Activated B cell treated with CpG ODN at 0.5 μM for 24 hours (primary cell): ENCODE measurements at regions of chr14 and their contacts with region 1.

Region 1: DNA sequence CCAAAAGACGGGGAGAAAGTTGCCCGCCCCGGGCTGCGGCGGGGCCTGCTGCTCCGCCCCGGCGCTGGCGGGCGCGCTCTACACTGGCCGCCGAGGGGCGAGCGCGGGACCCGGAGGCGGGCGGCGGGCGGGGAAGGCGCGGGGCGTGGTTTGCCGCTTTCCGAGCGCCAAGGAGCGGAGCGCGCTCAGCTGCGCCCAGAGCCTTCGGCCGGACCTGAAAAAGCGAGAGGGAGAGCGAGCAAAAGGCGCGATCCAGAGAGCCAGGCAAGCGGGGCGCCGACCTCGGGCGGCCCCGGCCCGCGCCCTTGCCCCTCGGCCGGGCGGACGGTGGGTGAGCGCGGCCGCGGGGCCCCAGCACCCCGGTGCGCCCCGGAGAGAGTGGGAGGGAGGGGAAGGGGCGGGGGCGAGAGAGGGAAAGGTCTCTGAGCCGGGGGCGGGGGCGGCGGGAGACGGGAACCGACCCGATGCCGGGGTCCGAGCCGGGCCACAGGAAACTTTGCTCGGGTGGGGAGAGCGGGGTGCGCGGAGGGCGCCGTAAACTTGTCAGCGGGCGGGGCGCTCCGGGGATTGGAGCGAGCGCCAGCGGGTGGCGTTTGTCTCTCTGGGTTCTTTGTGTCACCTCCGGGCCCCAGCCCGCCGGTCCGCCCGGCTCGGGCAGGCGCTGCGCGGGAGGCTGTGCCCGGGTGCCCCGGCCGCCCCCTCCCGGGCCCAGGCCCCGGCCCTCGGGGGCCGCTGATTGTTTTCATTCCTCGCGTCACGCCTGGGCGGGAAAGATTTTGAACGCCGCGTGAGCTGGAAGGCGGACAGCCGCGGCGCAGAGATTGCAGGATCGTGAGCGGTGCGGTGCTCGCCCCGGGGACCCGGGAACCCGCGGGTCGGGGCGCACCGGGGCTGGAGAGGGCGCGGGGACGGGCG is at the start of gene SYNE2:
- DNase-seq: peak; percentile 83
- ATAC-seq: peak; percentile 91
- H3K4me3 Mint-ChIP-seq: peak within 1 kb of the TSS; percentile 92
- H3K27ac Mint-ChIP-seq: peak within 1 kb of the TSS; percentile 87
- H3K4me1 Mint-ChIP-seq: peaks cover 24% of the 10 kb centered on the region
- H3K27me3 Mint-ChIP-seq: no peaks in the 10 kb centered on the region
- CTCF ChIP-seq: no peak
- total RNA-seq, gene SYNE2: 35.0 and 40.1 TPM in 2 replicates

Region 2: DNA sequence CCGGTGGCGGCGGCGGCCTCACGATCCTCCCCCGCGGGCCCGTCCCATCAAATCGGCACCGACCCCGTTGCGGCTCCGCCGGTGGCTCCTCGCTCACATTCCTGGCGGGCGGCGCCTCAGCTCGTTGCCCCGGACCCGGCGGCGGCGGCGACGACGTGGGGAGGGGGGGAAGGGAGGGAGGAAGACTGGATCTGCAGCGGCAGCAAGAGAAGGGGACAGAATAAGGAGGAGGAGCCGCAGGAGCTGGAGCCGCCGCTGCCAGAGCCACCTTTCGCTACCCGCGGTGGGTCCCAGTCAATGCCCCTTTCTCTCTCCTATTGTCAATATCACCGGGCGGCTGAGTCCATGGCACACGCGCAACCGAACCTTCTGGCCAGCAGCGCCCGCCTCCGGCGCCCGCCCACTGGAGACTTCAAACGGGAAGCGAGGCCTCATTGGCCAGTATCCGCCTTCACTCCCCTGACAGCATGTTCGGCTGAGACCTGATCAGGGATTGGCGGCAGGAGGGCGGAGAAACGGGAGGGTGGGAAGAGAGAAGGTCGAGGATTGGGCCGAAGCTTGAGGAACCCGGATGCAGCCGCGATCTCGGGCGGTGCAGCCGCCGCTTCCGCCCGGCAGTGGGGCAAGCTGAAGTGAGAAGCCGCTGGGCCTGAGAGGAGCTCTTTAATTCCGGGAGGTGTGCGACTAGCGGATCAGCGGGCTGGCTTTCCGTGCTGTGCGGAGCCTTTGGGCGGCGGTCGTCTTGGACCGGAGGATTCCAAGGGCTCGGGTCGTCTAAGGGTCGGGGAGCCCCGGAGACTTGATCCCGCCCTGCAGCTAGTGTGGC is 309.9 kb before region 1 on chr14 and contains the start of gene PPP2R5E:
- CTCF ChIA-PET with region 1: no interaction called
- POLR2A ChIA-PET with region 1: interaction called, 3 read pairs
- intact Hi-C with region 1: loop called (anchors 5 kb)
- DNase-seq: peak; percentile 87
- ATAC-seq: peak; percentile 96
- H3K4me3 Mint-ChIP-seq: peak within 1 kb of the TSS; percentile 97
- H3K27ac Mint-ChIP-seq: peak within 1 kb of the TSS; percentile 92
- H3K4me1 Mint-ChIP-seq: peaks cover 34% of the 10 kb centered on the region
- H3K27me3 Mint-ChIP-seq: no peaks in the 10 kb centered on the region
- CTCF ChIP-seq: no peak
- total RNA-seq, gene PPP2R5E: 40.0 and 44.8 TPM in 2 replicates

Region 3: GRCh38 chr14:63867933-63868921 is 15.2 kb after region 1 on chr14:
- CTCF ChIA-PET with region 1: interaction called, 6 read pairs
- POLR2A ChIA-PET with region 1: interaction called, 9 read pairs
- intact Hi-C with region 1: loop called (anchors 1 kb)
- DNase-seq: no peak
- ATAC-seq: peak; percentile 25
- H3K4me3 Mint-ChIP-seq: peak overlapping the region; percentile 50
- H3K27ac Mint-ChIP-seq: peak overlapping the region; percentile 79
- H3K4me1 Mint-ChIP-seq: peaks cover 60% of the 10 kb centered on the region
- H3K27me3 Mint-ChIP-seq: no peaks in the 10 kb centered on the region
- CTCF ChIP-seq: no peak

Region 4: DNA sequence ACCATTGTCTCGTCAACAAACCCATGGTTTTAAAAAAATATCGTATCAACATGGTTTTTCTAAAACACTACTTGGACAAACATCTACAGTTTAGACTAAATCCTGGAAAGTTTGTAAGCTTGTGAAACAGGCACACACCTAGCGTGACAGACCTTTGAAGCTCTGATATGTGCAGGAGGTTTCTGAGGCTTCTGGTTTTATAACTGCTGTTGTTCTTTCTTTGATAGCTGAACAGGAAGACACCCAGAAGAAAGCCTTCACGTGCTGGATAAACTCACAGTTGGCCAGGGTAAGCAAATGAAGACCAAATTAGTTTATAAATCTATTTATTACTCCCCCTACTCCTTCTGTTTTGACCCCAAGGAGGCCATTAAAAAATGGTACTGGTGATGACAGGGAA is 87.3 kb after region 1 on chr14:
- CTCF ChIA-PET with region 1: no interaction called
- POLR2A ChIA-PET with region 1: no interaction called
- intact Hi-C with region 1: loop called (anchors 5 kb)
- DNase-seq: no peak
- ATAC-seq: no peak
- H3K4me3 Mint-ChIP-seq: no peak overlapping the region
- H3K27ac Mint-ChIP-seq: no peak overlapping the region
- H3K4me1 Mint-ChIP-seq: no peaks in the 10 kb centered on the region
- H3K27me3 Mint-ChIP-seq: no peaks in the 10 kb centered on the region
- CTCF ChIP-seq: no peak

Region 5: GRCh38 chr14:64294672-64295413 is 441.8 kb after region 1 on chr14:
- CTCF ChIA-PET with region 1: interaction called, 5 read pairs
- POLR2A ChIA-PET with region 1: interaction called, 3 read pairs
- intact Hi-C with region 1: loop called (anchors 1 kb)
- DNase-seq: peak; percentile 92
- ATAC-seq: peak; percentile 91
- H3K4me3 Mint-ChIP-seq: peak overlapping the region; percentile 91
- H3K27ac Mint-ChIP-seq: peak overlapping the region; percentile 80
- H3K4me1 Mint-ChIP-seq: peaks cover 23% of the 10 kb centered on the region
- H3K27me3 Mint-ChIP-seq: no peaks in the 10 kb centered on the region
- CTCF ChIP-seq: peak; percentile 56

Region 6: GRCh38 chr14:64540208-64541157 is 687.4 kb after region 1 on chr14 and contains the start of gene HSPA2:
- CTCF ChIA-PET with region 1: no interaction called
- POLR2A ChIA-PET with region 1: no interaction called
- intact Hi-C with region 1: loop called (anchors 5 kb)
- DNase-seq: peak; percentile 93
- ATAC-seq: peak; percentile 90
- H3K4me3 Mint-ChIP-seq: peak within 1 kb of the TSS; percentile 100
- H3K27ac Mint-ChIP-seq: peak within 1 kb of the TSS; percentile 96
- H3K4me1 Mint-ChIP-seq: peaks cover 33% of the 10 kb centered on the region
- H3K27me3 Mint-ChIP-seq: peaks cover 2% of the 10 kb centered on the region
- CTCF ChIP-seq: no peak
- total RNA-seq, gene HSPA2: 3.8 and 5.4 TPM in 2 replicates